OCI-LY7 (cell line): ENCODE measurements at regions of chr6 and their contacts with region 1.

Region 1: DNA sequence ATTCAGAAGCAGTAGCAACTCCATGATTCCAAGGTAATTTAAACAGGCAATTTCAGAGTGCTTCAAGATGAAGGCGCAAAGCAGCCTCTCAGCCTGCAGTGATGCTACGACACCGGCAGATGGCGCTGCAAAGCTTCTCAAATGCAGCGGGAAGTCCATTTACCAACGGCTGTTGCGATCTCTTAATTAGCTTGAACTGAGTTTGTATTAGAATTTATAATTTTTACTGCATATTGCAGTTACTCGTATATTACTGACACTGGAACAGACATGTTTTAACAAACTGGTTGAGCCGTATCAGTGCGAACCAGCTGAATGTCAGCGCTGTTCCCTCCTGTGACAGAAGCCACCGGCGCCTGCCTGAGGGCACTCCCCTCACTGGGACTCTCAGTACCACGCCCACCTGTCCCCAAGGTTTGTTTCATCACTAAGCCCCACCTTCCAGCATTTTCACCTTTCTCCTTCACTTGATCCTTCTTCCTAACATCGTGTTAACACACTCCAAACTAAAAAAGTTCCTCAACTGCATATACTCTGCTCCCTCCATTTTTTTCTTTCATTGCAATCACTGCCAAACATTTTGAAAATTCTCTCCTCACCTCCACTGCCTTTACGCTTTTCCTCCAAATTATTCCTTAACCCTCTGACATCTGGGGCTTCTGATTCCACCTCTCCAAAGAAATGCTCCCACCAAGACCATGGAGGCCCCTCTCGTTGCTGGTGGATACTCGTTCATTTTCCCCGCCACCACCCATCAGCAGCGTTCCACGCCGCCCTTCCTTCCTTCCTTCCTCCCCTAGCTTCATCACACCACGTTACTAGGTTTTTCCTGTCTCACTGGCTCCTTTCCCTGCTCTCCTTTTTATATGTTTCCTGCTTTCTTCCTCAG is 14.5 kb downstream of the GNL1 start:
- DNase-seq: peak; percentile 87
- H3K4me3 ChIP-seq: peak overlapping the region; percentile 46
- H3K27ac ChIP-seq: peak overlapping the region; percentile 20
- H3K4me1 ChIP-seq: peaks cover 15% of the 10 kb centered on the region
- CTCF ChIP-seq: peak; percentile 100

Region 2: GRCh38 chr6:30590994-30591393 is 49.2 kb after region 1 on chr6:
- CTCF ChIA-PET with region 1: interaction called, 6 read pairs
- POLR2A ChIA-PET with region 1: interaction called, 3 read pairs
- intact Hi-C with region 1: loop called (anchors 2 kb)
- DNase-seq: no peak
- H3K4me3 ChIP-seq: no peak overlapping the region
- H3K27ac ChIP-seq: no peak overlapping the region
- H3K4me1 ChIP-seq: no peaks in the 10 kb centered on the region
- CTCF ChIP-seq: no peak

Region 3: GRCh38 chr6:30672445-30673253 is 130.9 kb after region 1 on chr6 and contains the start of gene DHX16:
- CTCF ChIA-PET with region 1: no interaction called
- POLR2A ChIA-PET with region 1: no interaction called
- intact Hi-C with region 1: loop called (anchors 5 kb)
- DNase-seq: peak; percentile 97
- H3K4me3 ChIP-seq: peak within 1 kb of the TSS; percentile 89
- H3K27ac ChIP-seq: no peak within 1 kb of the TSS
- H3K4me1 ChIP-seq: peaks cover 12% of the 10 kb centered on the region
- CTCF ChIP-seq: peak; percentile 97
- total RNA-seq, gene DHX16: 27.1 and 30.5 TPM in 2 replicates

Region 4: DNA sequence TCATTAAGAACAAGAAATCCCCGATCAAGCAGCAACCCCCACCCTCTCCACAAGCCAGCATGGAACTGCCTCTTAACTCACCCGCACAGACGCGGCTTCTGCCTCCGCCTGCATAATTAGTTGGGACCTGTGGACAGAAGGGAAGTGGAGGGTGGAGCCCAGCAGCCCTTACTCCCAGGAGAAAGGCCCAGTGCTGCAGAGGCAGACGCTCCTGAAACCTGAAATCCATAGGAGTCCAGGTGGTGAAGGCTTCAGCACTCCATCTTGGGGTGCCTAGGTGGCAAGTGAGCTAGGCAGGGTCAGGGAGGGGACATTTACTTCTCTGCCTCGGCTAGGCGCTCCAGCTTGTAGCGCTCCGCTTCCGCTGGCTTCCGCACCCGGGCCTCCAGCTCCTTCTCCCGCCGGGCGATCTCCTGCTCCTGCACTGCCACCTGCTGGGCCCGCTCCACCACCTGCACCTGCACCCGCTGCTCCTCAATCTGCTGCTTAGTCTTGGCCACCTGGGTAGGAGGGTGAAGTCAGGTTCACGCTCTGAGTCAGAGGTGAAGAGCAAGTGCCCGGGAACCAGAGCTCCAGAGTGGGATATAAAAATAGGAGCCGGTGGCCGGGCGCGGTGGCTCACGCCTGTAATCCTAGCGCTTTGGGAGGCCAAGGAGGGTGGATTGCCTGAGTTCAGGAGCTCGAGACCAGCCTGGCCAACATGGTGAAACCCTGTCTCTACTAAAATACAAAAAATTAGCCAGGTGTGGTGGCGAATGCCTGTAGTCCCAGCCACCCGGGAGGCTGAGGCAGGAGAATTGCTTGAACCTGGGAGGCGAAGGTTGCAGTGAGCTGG is 189.1 kb after region 1 on chr6:
- CTCF ChIA-PET with region 1: interaction called, 3 read pairs
- POLR2A ChIA-PET with region 1: no interaction called
- intact Hi-C with region 1: loop called (anchors 5 kb)
- DNase-seq: peak; percentile 89
- H3K4me3 ChIP-seq: peak overlapping the region; percentile 18
- H3K27ac ChIP-seq: no peak overlapping the region
- H3K4me1 ChIP-seq: peaks cover 33% of the 10 kb centered on the region
- CTCF ChIP-seq: peak; percentile 86